Sigmoid colon (tissue), 7 donors: ENCODE measurements at regions of chr3 and their contacts with region 1.

Region 1: DNA sequence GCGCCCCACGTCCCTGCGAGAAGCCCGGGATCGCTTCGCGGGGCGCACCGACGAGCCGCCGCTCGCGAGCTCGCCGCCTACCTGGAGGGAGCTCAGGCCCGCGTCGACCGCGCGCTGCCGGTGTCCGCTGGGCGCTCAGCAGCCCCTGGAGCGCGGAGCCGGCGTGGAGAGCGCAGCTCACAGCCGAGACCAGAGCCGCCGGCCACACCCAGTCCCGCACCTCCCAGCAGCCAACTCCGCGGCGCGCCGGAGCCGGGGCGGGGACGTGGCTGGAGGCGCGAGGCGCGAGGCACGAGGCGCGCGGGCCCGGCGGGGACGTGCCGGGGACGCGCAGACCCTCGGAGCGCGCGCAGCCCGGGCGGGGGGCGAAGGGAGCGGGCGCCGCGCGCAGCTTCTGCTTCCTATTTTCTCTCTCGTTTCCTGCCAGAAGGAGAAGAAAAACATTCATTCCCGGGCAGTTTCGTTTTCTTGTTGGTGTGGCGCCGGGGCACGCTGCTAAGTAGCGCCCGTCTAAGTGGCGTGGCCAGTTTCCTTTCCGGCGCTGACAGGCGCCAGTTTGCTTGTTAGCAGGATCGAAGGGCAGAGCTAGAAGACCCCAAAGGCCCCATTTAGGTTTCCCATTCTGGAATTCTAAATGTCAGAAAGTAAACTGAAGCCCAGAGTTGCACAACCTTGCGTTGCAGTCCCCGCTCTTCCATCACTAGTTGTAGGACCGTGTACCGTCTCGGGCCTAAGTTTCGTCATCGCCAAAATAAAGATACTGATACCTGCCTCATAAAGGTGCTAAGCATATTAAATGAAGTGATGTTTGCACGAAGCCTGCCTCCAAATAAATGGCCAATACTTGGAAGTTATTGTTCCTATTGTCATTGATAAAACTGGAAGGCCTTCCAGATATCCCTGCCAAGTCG is at the start of gene GNB4:
- DNase-seq: peak; percentile 88
- H3K4me3 ChIP-seq: peak within 1 kb of the TSS; percentile 63 to 84 (median 68)
- H3K27ac ChIP-seq: peak within 1 kb of the TSS; percentile 88 to 96 (median 94)
- H3K4me1 ChIP-seq: peaks cover 0 to 35% (median 25%) of the 10 kb centered on the region in 4 donors
- H3K27me3 ChIP-seq: no peaks in the 10 kb centered on the region
- CTCF ChIP-seq: no peak
- EP300 ChIP-seq: no peak
- POLR2A ChIP-seq: no peak
- total RNA-seq, gene GNB4: 32.5 to 44.3 (median 37.4) TPM

Region 2: GRCh38 chr3:179526989-179527391 is 75.5 kb after region 1 on chr3:
- intact Hi-C with region 1: loop called (anchors 5 kb)
- DNase-seq: peak; percentile 84
- H3K4me3 ChIP-seq: peak overlapping the region in 2 of 4 donors; percentile 5 to 11
- H3K27ac ChIP-seq: peak overlapping the region; percentile 55 to 79 (median 73)
- H3K4me1 ChIP-seq: peaks cover 0 to 20% (median 16%) of the 10 kb centered on the region in 4 donors
- H3K27me3 ChIP-seq: no peaks in the 10 kb centered on the region
- CTCF ChIP-seq: no peak
- EP300 ChIP-seq: peak in 1 of 4 donors; percentile 4
- POLR2A ChIP-seq: no peak